ENCODE measurements at regions of chr10 and their contacts with region 1.

Region 1: DNA sequence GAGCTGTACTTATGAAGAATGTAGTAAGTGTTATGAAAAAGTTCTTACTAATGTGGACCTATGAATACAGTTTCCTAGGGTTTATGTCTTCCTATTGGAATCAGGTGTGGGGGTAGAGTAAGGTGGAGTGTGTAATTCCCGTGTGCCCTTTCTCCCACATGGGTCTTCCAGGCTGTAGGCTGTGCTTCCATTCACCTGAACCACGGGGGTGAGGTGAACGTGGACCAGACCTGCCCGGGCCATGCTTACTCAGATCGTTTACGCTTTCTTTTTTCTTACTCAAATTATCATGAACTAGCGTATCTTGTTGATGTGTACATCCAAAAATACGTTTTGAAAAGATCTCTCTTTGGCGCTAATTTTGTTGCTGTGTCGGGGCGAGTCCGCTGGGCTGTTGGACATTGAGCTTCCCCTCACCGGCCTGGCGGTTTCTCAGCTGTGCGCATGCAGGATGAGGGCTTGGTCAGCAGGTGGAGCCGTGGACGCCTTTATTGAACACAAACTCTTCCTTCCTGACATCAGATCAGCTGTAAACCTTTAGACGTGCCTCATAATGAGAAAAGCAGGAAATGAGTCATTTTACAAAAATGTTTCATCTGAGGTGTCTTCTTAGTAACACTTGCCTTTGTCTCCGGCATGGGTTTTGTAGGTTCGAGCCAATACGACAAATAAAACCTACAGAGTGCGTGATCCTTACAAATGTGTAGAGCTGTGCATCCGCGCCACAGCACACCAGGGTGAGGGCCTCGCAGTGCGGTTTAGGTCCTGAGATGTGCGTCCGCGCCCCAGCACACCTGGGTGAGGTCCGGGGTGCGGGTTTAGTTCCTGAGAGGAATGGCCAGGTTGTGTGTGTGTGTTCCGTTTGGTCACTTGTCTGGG is 53.8 kb downstream of the WDR37 start:
- DNase-seq: peak; percentile 70
- H3K4me3 Mint-ChIP-seq: peak overlapping the region; percentile 40
- H3K27ac Mint-ChIP-seq: peak overlapping the region; percentile 74
- H3K4me1 Mint-ChIP-seq: peaks cover 24% of the 10 kb centered on the region
- H3K27me3 Mint-ChIP-seq: no peaks in the 10 kb centered on the region

Region 2: GRCh38 chr10:718152-718700 is 391.8 kb before region 1 on chr10:
- intact Hi-C with region 1: no loop called
- DNase-seq: no peak
- H3K4me3 Mint-ChIP-seq: no peak overlapping the region
- H3K27ac Mint-ChIP-seq: no peak overlapping the region
- H3K4me1 Mint-ChIP-seq: no peaks in the 10 kb centered on the region
- H3K27me3 Mint-ChIP-seq: peaks cover 3% of the 10 kb centered on the region

Region 3: DNA sequence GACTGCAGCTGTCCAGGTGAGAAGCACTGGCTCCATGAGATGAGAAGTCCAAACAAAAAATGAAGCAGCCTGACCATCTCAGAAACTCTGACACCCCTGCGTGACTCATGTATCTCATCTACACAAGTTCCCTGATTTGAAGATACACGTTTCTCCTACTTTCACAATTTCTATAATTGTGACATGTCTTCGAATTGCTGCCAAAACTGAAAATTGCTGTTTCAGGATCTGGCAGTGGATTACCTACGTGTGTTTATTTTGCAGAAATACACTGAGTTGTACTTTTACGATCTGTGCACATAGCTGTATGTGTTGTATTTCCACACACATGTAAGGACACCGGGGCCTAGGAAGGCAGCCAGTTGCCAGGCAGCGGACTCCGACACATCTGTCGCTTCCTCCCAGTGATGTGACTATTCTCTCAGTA is 231.7 kb before region 1 on chr10:
- intact Hi-C with region 1: no loop called
- DNase-seq: no peak
- H3K4me3 Mint-ChIP-seq: no peak overlapping the region
- H3K27ac Mint-ChIP-seq: no peak overlapping the region
- H3K4me1 Mint-ChIP-seq: peaks cover 1% of the 10 kb centered on the region
- H3K27me3 Mint-ChIP-seq: no peaks in the 10 kb centered on the region

Region 4: DNA sequence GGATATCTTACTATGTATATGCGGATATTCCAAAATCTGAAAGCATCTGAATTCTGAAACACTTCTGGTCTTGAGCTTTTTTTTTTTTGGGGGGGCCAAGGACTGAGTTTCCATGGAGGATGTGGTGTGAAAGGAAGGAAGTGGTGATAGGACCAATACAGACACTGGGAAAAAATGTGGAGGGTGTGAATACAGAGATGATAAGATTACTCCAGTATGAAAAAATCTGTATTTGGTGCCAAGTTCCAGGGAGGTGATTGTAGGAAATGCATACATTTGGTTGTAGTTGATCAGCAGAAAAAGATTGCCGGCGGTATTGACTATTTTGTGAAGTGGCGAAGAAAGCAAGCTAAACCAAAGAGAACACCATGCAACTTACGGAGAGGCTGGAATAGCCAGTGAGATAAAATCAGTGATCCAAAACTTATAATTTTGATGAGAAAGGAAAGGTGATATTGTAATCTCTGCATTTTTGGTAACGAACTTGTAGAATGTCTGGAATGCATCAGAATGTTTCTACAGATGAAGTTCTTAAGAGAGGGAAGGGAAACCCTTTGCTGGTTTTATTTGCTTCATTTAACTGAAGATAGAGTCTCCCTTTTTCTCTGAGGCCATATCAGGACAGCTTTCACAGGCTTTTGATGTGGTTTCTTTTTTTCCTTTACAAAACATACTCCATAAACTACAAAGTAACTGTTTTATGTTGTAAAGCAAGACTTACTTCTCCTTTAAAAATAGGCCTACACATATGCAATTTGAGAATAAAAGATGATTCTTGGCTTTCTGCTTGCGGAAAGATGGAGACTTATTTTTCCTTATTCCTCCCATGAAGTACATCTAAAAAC is 47.9 kb before region 1 on chr10:
- intact Hi-C with region 1: loop called (anchors 2 kb)
- DNase-seq: no peak
- H3K4me3 Mint-ChIP-seq: peak overlapping the region; percentile 37
- H3K27ac Mint-ChIP-seq: peak overlapping the region; percentile 50
- H3K4me1 Mint-ChIP-seq: peaks cover 66% of the 10 kb centered on the region
- H3K27me3 Mint-ChIP-seq: no peaks in the 10 kb centered on the region

Region 5: DNA sequence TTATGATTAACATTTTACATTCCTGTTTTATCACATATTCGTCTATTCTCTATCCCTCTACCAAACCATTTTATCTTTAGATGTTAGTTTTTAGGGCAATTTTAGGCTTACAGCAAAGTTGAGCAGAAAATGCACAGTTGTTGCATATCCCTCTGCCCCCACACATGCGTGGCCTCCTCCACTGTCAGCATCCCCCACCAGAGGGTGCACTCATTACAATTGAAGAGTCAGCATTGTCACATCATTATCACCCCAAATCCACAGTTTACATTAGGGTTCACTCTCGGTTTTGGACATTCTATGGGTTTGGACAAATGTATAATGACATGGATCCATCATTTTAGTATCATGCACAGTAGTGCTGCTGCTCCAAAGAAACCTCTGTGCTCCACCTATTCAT is 32.6 kb after region 1 on chr10:
- intact Hi-C with region 1: no loop called
- DNase-seq: no peak
- H3K4me3 Mint-ChIP-seq: no peak overlapping the region
- H3K27ac Mint-ChIP-seq: no peak overlapping the region
- H3K4me1 Mint-ChIP-seq: no peaks in the 10 kb centered on the region
- H3K27me3 Mint-ChIP-seq: peaks cover 34% of the 10 kb centered on the region

Region 6: GRCh38 chr10:1358943-1359598 is 249.0 kb after region 1 on chr10:
- intact Hi-C with region 1: loop called (anchors 5 kb)
- DNase-seq: peak; percentile 11
- H3K4me3 Mint-ChIP-seq: no peak overlapping the region
- H3K27ac Mint-ChIP-seq: no peak overlapping the region
- H3K4me1 Mint-ChIP-seq: peaks cover 15% of the 10 kb centered on the region
- H3K27me3 Mint-ChIP-seq: peaks cover 22% of the 10 kb centered on the region

Measured in activated T-helper 2 cell treated with anti-CD3 and anti-CD28 coated beads, Interferon-gamma antibody, Interleukin-2, Interleukin-4, amounts not matched to agents 10 μg/mL and 5 μg/mL and 100 μg/mL, durations not matched to agents 14 hours and 24 hours and 36 hours (primary cell).